Activated CD8-positive, alpha-beta memory T cell treated with anti-CD3 and anti-CD28 coated beads, Interleukin-2, amount 10 ng/mL, durations not matched to agents 7 days and 5 days (primary cell): ENCODE measurements at regions of chr3 and their contacts with region 1.

Region 1: GRCh38 chr3:129160891-129161859 is at the start of gene ISY1:
- DNase-seq: peak; percentile 93
- ATAC-seq: peak; percentile 84
- H3K4me3 Mint-ChIP-seq: peak within 1 kb of the TSS; percentile 92
- H3K27ac Mint-ChIP-seq: peak within 1 kb of the TSS; percentile 97
- H3K4me1 Mint-ChIP-seq: peaks cover 31% of the 10 kb centered on the region
- H3K27me3 Mint-ChIP-seq: no peaks in the 10 kb centered on the region
- total RNA-seq, gene ISY1: 44.4 to 75.9 TPM

Region 2: DNA sequence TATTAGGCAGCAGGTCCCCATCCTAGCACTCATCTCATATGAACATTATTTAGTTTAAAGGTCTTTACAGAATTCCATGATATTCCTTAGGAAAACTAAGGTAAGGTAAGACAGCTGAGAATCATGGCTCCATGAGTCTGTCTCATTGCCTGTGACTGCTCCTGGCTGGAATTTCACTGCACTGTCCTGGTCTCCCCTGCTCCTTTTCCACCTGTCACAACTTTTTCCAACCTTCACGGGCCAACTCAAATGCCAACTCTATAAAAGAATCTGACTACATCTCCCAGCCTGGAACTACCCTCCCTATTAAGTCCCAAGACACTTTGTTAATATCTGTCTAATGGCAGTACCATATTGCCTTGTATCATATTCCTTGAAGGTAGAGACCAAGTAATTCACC is 14.9 kb after region 1 on chr3:
- CTCF ChIA-PET with region 1: interaction called, 18 read pairs
- DNase-seq: no peak
- ATAC-seq: no peak
- H3K4me3 Mint-ChIP-seq: no peak overlapping the region
- H3K27ac Mint-ChIP-seq: no peak overlapping the region
- H3K4me1 Mint-ChIP-seq: peaks cover 78% of the 10 kb centered on the region
- H3K27me3 Mint-ChIP-seq: no peaks in the 10 kb centered on the region

Region 3: DNA sequence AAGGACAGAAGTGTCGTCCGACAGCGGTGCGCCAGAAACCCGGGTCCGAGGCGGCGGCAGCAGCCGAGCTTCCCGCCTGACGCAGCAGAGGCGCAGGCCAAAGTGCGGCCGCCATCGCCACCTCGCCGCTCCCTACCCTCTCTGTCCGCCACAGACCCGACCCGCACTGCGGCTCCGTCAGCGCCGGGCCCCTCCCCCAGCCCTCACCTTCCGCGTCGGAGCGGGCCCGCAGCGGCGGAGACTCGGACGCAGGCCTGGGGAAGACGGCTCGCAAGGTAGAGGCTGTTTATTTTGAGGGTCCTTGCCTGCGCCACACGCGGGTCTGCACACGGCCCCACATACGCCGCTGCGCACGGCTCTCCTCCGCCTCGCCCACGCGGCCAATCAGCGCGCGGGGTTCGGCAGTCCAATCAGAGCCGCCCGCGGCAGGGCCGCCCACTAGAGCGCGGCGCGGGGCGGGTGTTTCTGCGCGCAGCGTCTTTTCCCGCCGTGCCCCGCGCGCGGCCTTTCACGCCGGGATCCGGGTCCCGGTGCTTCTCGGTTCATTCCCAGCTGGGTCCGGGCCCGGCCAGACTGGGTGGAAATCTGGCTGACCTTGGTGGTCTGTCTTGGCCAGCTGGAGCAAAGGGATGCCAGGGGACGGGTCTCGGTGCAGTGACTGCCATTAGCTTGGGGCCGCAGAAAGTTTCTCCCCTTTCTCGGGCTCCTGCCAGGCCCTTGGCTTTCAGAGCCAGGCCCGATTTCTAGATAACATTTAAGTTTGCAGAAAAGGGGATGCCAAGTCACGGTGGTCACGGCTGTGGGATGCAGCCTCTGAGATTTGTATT is 22.6 kb after region 1 on chr3 and contains the start of gene CNBP:
- CTCF ChIA-PET with region 1: interaction called, 18 read pairs
- DNase-seq: peak; percentile 94
- ATAC-seq: peak; percentile 98
- H3K4me3 Mint-ChIP-seq: peak within 1 kb of the TSS; percentile 87
- H3K27ac Mint-ChIP-seq: peak within 1 kb of the TSS; percentile 95
- H3K4me1 Mint-ChIP-seq: peaks cover 42% of the 10 kb centered on the region
- H3K27me3 Mint-ChIP-seq: no peaks in the 10 kb centered on the region
- total RNA-seq, gene CNBP: 270 to 330 TPM

Region 4: GRCh38 chr3:129238945-129239706 is 78.0 kb after region 1 on chr3:
- CTCF ChIA-PET with region 1: interaction called, 59 read pairs
- DNase-seq: peak; percentile 80
- ATAC-seq: peak; percentile 87
- H3K4me3 Mint-ChIP-seq: peak overlapping the region; percentile 53
- H3K27ac Mint-ChIP-seq: peak overlapping the region; percentile 92
- H3K4me1 Mint-ChIP-seq: peaks cover 48% of the 10 kb centered on the region
- H3K27me3 Mint-ChIP-seq: no peaks in the 10 kb centered on the region